ENCODE measurements at regions of chr10 and their contacts with region 1.

Region 1: GRCh38 chr10:44864637-44865288 is 46.4 kb upstream of the TMEM72 start:
- DNase-seq: peak; percentile 95
- H3K4me3 Mint-ChIP-seq: peak overlapping the region; percentile 92
- H3K27ac Mint-ChIP-seq: peak overlapping the region; percentile 34
- H3K4me1 Mint-ChIP-seq: peaks cover 35% of the 10 kb centered on the region
- H3K27me3 Mint-ChIP-seq: peaks cover 61% of the 10 kb centered on the region
- CTCF ChIP-seq: peak; percentile 93

Region 2: GRCh38 chr10:43671656-43672531 is 1192.9 kb before region 1 on chr10:
- CTCF ChIA-PET with region 1: no interaction called
- intact Hi-C with region 1: loop called (anchors 2 kb)
- DNase-seq: peak; percentile 62
- H3K4me3 Mint-ChIP-seq: no peak overlapping the region
- H3K27ac Mint-ChIP-seq: no peak overlapping the region
- H3K4me1 Mint-ChIP-seq: no peaks in the 10 kb centered on the region
- H3K27me3 Mint-ChIP-seq: peaks cover 56% of the 10 kb centered on the region
- CTCF ChIP-seq: peak; percentile 71

Region 3: GRCh38 chr10:43863859-43864591 is 1000.7 kb before region 1 on chr10:
- CTCF ChIA-PET with region 1: no interaction called
- intact Hi-C with region 1: loop called (anchors 10 kb)
- DNase-seq: peak; percentile 13
- H3K4me3 Mint-ChIP-seq: no peak overlapping the region
- H3K27ac Mint-ChIP-seq: no peak overlapping the region
- H3K4me1 Mint-ChIP-seq: peaks cover 7% of the 10 kb centered on the region
- H3K27me3 Mint-ChIP-seq: peaks cover 18% of the 10 kb centered on the region
- CTCF ChIP-seq: no peak

Region 4: DNA sequence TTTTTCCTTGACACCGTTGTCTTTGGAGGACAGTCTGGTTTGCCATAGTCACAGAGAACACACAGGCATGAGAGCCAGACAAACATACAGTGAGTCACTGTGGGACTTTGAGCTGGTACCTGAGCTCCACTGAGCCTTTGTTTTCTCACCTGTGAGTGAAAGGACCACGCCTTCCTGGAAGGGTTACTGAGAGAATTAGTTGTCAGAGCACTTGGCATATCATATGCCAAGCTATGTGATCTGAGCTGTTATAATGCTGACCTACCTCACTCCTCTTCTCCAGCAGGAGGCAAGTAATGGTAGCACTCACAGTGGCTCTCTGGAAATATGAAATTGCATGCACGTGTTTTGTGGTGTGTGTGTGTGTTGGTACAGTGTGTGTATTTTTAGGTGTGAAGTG is 539.6 kb before region 1 on chr10:
- CTCF ChIA-PET with region 1: no interaction called
- intact Hi-C with region 1: loop called (anchors 10 kb)
- DNase-seq: peak; percentile 48
- H3K4me3 Mint-ChIP-seq: no peak overlapping the region
- H3K27ac Mint-ChIP-seq: no peak overlapping the region
- H3K4me1 Mint-ChIP-seq: no peaks in the 10 kb centered on the region
- H3K27me3 Mint-ChIP-seq: no peaks in the 10 kb centered on the region
- CTCF ChIP-seq: no peak

Region 5: DNA sequence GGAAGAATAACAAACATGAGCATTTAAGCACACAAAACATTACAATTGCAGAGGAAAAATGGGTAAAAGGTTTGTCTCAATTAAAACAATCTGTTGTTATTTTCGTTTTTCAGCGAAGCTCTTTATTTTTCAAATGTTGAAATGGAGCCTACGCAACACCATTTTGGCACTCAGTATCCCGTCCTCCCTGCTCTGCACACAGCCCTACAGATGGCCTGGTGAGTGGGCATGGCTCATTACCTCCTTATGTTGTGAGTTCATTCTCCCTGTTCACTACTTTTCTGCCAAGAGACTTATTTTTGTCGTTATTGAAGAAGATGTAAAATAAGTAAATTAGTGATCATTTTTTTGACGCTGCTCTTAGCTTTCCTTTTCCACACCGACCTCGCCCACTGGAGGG is 312.0 kb before region 1 on chr10:
- CTCF ChIA-PET with region 1: interaction called, 11 read pairs
- intact Hi-C with region 1: no loop called
- DNase-seq: no peak
- H3K4me3 Mint-ChIP-seq: no peak overlapping the region
- H3K27ac Mint-ChIP-seq: no peak overlapping the region
- H3K4me1 Mint-ChIP-seq: no peaks in the 10 kb centered on the region
- H3K27me3 Mint-ChIP-seq: peaks cover 61% of the 10 kb centered on the region
- CTCF ChIP-seq: no peak

Region 6: GRCh38 chr10:44801383-44802327 is 63.1 kb before region 1 on chr10:
- CTCF ChIA-PET with region 1: interaction called, 3 read pairs
- intact Hi-C with region 1: loop called (anchors 5 kb)
- DNase-seq: peak; percentile 96
- H3K4me3 Mint-ChIP-seq: peak overlapping the region; percentile 28
- H3K27ac Mint-ChIP-seq: peak overlapping the region; percentile 69
- H3K4me1 Mint-ChIP-seq: peaks cover 60% of the 10 kb centered on the region
- H3K27me3 Mint-ChIP-seq: peaks cover 6% of the 10 kb centered on the region
- CTCF ChIP-seq: no peak

Region 7: GRCh38 chr10:44913350-44914081 is 48.8 kb after region 1 on chr10:
- CTCF ChIA-PET with region 1: no interaction called
- intact Hi-C with region 1: loop called (anchors 5 kb)
- DNase-seq: no peak
- H3K4me3 Mint-ChIP-seq: no peak overlapping the region
- H3K27ac Mint-ChIP-seq: no peak overlapping the region
- H3K4me1 Mint-ChIP-seq: peaks cover 14% of the 10 kb centered on the region
- H3K27me3 Mint-ChIP-seq: peaks cover 37% of the 10 kb centered on the region
- CTCF ChIP-seq: no peak

Measured in Calu3 (cell line).